ENCODE measurements at regions of chr1 and their contacts with region 1.

Region 1: DNA sequence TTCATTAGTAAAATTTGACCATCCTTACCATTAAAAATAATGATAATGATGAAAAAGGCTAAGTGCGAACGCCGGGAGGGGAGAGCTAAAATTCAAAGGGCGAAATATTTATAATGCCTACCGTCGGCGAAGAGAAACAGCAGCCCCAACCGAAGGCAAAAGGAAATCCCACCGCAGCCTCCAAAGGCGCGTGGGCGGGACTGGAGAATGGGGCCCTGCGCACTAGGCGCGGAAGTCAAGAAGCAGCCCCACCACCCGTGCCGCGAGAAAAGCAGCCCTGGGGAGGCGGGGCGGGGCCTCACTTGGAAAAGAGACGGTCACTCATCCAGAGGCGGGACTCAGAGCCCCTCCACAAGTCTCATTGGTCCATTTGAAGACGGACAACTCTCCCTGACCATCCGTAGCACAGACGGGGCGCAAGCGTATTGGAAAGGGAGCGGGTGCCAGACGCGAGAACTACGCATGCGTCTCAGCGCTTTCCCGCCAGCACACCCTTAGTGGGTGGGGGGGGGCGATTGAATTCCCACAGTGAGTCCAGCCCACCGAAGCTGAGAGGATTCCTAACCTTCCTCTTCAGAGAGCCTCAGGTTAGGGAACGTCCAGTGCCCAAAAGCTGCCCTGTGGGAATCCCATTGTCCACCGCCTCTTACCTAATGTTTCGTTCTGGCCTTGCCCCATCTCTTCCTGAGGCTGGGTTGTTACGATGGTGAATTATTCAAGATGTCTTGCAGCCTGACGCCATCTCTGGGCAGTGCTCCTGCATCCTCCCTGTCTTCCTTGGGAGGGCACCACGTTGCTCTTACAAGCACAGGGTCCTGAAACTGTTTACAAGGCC is 19.0 kb downstream of the MTX1 start:
- DNase-seq: peak; percentile 99
- H3K4me3 ChIP-seq: peak overlapping the region; percentile 41 to 82 (median 58)
- H3K27ac ChIP-seq: peak overlapping the region; percentile 63
- H3K4me1 ChIP-seq: peaks cover 31% of the 10 kb centered on the region
- H3K27me3 ChIP-seq: no peaks in the 10 kb centered on the region
- CTCF ChIP-seq: no peak
- POLR2A ChIP-seq: peak; percentile 96

Region 2: GRCh38 chr1:154145986-154146385 is 1081.5 kb before region 1 on chr1:
- CTCF ChIA-PET with region 1: no interaction called
- POLR2A ChIA-PET with region 1: no interaction called
- dilution Hi-C with region 1: no loop called
- intact Hi-C with region 1: no loop called
- DNase-seq: no peak
- H3K4me3 ChIP-seq: no peak overlapping the region
- H3K27ac ChIP-seq: no peak overlapping the region
- H3K4me1 ChIP-seq: peaks cover 3% of the 10 kb centered on the region
- H3K27me3 ChIP-seq: no peaks in the 10 kb centered on the region
- CTCF ChIP-seq: peak; percentile 23 to 32
- POLR2A ChIP-seq: no peak

Region 3: DNA sequence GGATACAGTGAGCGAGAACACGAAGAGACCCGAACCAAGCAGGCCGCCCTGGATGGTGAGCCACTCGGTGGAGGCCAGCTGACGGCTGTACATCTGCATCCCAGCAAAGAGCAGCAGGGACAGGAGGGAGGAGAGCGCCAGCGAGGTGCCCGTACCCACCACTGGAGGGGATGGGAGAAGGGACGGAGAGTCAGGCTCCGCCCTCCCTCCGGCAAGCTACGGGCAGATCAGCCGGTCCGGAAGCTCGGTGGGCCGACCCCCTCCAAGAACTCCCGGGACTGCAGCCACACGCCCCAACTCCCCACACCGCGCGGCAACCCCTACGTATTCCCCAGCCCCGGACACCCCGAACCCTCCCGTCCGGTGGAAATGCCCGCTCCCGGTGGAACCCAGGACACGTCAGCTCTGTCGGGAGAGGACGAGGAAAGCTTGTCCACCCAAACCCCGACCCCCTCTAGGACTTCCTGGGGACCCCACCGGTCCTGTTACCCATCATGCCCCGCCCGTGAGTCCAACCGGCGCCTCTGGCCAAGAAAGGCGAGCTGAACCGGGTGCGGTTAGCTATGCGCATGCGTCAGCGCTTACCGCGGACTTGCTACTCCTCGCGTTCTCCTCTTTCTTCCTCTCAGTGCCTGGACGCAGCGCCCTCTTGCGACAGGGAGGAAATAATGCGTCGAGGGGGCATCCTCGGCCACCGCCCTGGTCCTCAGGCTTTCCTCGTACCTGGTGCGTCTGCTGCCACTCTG is 54.6 kb before region 1 on chr1 and contains the start of gene KRTCAP2:
- CTCF ChIA-PET with region 1: interaction called, 10 read pairs
- POLR2A ChIA-PET with region 1: no interaction called
- dilution Hi-C with region 1: no loop called
- intact Hi-C with region 1: loop called (anchors 1 kb)
- DNase-seq: peak; percentile 93
- H3K4me3 ChIP-seq: peak within 1 kb of the TSS; percentile 52 to 91 (median 63)
- H3K27ac ChIP-seq: peak within 1 kb of the TSS; percentile 76
- H3K4me1 ChIP-seq: peaks cover 11% of the 10 kb centered on the region
- H3K27me3 ChIP-seq: no peaks in the 10 kb centered on the region
- CTCF ChIP-seq: peak; percentile 95 to 98
- POLR2A ChIP-seq: peak; percentile 97
- total RNA-seq, gene KRTCAP2: 170 and 207 TPM in 2 replicates

Region 4: DNA sequence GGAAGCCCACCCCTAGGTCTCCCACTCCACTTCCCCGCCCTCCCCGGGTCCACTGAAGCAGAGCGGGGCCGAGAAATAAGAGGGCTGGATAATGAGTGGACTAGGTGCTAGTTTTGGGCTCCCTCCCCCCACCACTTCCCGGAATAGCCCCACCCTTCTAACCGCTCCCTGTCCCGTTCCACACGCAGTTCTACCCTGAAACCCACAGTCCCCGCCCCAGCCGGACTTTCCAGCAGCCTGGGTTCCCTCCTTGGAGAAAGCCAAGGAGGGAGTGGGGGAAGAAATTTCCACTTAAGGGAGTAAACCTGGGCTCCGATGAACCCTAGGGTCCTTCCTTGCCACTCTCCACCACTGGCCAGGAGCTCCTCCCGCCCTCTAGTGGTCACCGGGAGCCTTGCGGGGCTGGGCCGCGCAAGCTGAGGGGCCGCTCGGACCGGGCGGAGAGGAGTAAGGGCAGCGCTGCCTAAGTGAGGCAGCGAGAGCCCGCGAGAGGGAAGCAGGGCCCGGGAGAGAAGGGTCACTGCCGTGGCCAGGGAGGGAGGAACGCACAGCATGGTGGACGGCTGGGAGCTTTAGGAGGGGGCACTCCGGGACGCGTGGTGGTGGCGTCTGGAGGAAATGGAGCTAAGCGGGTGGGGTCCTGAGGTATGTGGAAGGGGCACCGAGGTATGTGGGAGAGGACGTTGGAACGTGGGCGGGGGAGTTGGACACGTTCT is 34.0 kb before region 1 on chr1:
- CTCF ChIA-PET with region 1: interaction called, 16 read pairs
- POLR2A ChIA-PET with region 1: no interaction called
- dilution Hi-C with region 1: no loop called
- intact Hi-C with region 1: loop called (anchors 5 kb)
- DNase-seq: peak; percentile 91
- H3K4me3 ChIP-seq: peak overlapping the region; percentile 30 to 37 (median 31)
- H3K27ac ChIP-seq: peak overlapping the region; percentile 1
- H3K4me1 ChIP-seq: peaks cover 13% of the 10 kb centered on the region
- H3K27me3 ChIP-seq: no peaks in the 10 kb centered on the region
- CTCF ChIP-seq: peak; percentile 98 to 99
- POLR2A ChIP-seq: peak; percentile 30

Region 5: GRCh38 chr1:155244368-155245162 is 17.1 kb after region 1 on chr1:
- CTCF ChIA-PET with region 1: interaction called, 3 read pairs
- POLR2A ChIA-PET with region 1: interaction called, 8 read pairs
- dilution Hi-C with region 1: no loop called
- intact Hi-C with region 1: loop called (anchors 1 kb)
- DNase-seq: peak; percentile 99
- H3K4me3 ChIP-seq: peak overlapping the region; percentile 48 to 61 (median 60)
- H3K27ac ChIP-seq: peak overlapping the region; percentile 41
- H3K4me1 ChIP-seq: peaks cover 16% of the 10 kb centered on the region
- H3K27me3 ChIP-seq: no peaks in the 10 kb centered on the region
- CTCF ChIP-seq: peak; percentile 8 to 17
- POLR2A ChIP-seq: peak; percentile 99